GM12878 (cell line): ENCODE measurements at regions of chr2 and their contacts with region 1.

Region 1: DNA sequence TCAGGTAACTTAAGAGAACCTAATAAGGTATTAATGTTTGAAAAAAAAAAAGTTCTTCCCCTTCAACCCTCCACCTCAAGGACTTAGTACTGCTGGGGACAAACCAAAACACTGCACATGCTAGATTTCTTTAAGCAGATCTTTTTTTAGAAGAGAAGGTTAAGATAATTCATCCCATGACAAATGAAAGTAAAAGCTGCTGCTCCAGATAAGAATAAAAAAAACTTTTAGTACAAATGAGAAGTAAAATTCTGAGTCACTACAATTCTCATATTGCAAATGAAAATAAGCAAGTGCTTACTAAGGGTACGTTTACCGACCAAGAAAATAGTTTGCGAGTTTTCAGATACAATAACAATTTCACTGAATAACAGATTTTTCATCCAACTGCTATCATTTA is 8.9 kb downstream of the STAM2 start:
- DNase-seq: no peak
- ATAC-seq: peak; percentile 79
- H3K4me3 ChIP-seq: peak overlapping the region; percentile 56
- H3K27ac ChIP-seq: peak overlapping the region; percentile 86
- H3K4me1 ChIP-seq: peaks cover 19% of the 10 kb centered on the region
- H3K27me3 ChIP-seq: no peaks in the 10 kb centered on the region
- CTCF ChIP-seq: no peak
- EP300 ChIP-seq: no peak
- POLR2A ChIP-seq: no peak
- RAD21 ChIP-seq: no peak

Region 2: GRCh38 chr2:151828143-151828889 is 338.3 kb before region 1 on chr2 and contains the start of gene ARL5A:
- CTCF ChIA-PET with region 1: no interaction called
- POLR2A ChIA-PET with region 1: no interaction called
- RAD21 ChIA-PET with region 1: no interaction called
- SMC1A ChIA-PET with region 1: no interaction called
- in situ Hi-C with region 1: no loop called
- intact Hi-C with region 1: loop called (anchors 10 kb)
- DNase-seq: peak; percentile 92
- ATAC-seq: peak; percentile 92
- H3K4me3 ChIP-seq: peak within 1 kb of the TSS; percentile 92
- H3K27ac ChIP-seq: peak within 1 kb of the TSS; percentile 88
- H3K4me1 ChIP-seq: peaks cover 13% of the 10 kb centered on the region
- H3K27me3 ChIP-seq: no peaks in the 10 kb centered on the region
- CTCF ChIP-seq: no peak
- EP300 ChIP-seq: 0 out of 4 replicates have a peak, but pooled peaks of 1 of the 2 experiments have one; percentile 57
- POLR2A ChIP-seq: peak; percentile 94
- RAD21 ChIP-seq: no peak
- polyA plus RNA-seq, gene ARL5A: 9.4 to 10.9 TPM

Region 3: DNA sequence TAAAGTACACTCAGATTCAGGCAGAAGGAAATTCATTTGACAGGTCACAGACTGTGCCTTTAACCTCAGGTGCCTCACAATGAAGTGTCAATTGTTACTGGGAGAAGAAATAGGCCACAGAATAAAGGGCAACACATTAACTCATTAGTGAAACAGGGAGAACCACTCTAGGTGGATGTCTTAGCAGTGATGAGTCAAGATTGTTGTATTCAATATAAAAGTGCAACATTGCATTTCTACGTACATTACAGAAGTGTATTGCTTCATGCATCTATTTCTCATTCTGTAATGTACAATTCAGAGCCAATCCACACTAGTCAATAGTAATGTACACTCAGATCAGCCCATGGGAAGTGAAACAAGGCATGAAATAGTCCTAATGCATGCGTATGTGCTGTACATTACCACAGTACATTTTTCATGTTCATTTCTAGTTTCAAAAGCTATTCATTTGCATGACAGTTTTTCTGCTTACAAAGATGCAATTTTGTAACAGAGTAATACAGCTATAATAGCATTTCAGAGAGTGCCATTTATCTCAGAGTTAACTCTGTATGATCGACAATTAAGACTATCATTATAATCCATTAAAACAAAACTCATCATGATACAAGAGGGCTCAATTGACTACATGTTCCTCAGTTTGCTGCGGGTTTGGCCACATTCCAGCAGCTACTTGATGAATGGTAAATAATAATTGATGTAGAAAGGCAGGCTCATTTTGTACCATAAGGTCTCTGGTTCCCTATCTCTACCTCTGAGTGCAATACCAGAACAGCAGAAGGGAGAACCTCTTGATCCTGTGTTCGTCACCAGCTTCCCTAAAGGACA is 326.2 kb before region 1 on chr2:
- CTCF ChIA-PET with region 1: no interaction called
- POLR2A ChIA-PET with region 1: no interaction called
- RAD21 ChIA-PET with region 1: no interaction called
- SMC1A ChIA-PET with region 1: no interaction called
- in situ Hi-C with region 1: loop called (anchors 10 kb)
- intact Hi-C with region 1: no loop called
- DNase-seq: peak; percentile 82
- ATAC-seq: peak; percentile 99
- H3K4me3 ChIP-seq: no peak overlapping the region
- H3K27ac ChIP-seq: peak overlapping the region; percentile 72
- H3K4me1 ChIP-seq: peaks cover 40% of the 10 kb centered on the region
- H3K27me3 ChIP-seq: no peaks in the 10 kb centered on the region
- CTCF ChIP-seq: no peak
- EP300 ChIP-seq: peak in 1 of 2 experiments; percentile 91; a peak in 3 of 4 replicates
- POLR2A ChIP-seq: no peak
- RAD21 ChIP-seq: no peak

Region 4: DNA sequence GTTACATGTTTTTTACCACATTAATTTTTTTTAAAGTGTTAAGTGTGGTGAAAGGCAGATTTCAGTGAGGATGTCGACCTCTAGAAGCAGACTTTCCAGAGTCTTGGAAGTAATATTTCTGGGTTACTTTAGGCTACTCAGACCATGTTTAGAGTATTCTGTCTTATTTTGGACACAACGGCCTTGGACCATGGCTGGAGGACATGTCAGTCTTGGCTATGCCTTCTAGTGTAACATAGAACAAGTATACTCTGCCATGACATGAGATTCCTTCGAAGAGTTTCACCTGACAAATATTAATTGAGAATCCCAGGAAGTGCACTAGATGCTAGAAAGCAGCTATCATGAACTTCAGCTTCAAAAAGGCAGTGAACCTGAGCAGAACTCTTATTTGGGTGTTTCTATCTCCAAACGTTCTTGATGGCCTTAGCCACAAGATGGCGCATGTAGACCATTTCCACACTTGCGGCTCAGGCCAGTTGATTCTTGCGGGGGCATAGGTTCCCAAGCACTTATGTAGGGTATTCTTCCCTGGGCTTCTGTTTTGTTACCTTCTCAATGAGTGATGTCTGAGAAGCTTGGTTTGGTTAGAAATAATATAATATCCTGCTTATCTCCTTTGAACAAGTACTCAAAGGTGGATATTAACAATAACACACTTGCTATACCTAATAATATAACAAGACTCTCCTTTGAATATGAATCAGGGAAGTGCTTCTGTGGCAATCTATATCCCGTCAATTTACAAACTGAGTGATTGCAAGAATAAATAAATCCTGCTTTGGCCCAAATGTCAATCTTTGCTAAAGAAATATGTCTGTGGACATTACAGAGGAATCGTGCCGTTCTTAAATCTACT is 129.8 kb before region 1 on chr2:
- CTCF ChIA-PET with region 1: interaction called, 13 read pairs
- POLR2A ChIA-PET with region 1: no interaction called
- RAD21 ChIA-PET with region 1: interaction called, 5 read pairs
- SMC1A ChIA-PET with region 1: interaction called, 20 read pairs
- in situ Hi-C with region 1: no loop called
- intact Hi-C with region 1: no loop called
- DNase-seq: no peak
- ATAC-seq: peak; percentile 97
- H3K4me3 ChIP-seq: no peak overlapping the region
- H3K27ac ChIP-seq: no peak overlapping the region
- H3K4me1 ChIP-seq: no peaks in the 10 kb centered on the region
- H3K27me3 ChIP-seq: no peaks in the 10 kb centered on the region
- CTCF ChIP-seq: peak; percentile 78 to 89 (median 80)
- EP300 ChIP-seq: no peak
- POLR2A ChIP-seq: no peak
- RAD21 ChIP-seq: peak; percentile 99

Region 5: GRCh38 chr2:152054593-152054992 is 112.0 kb before region 1 on chr2:
- CTCF ChIA-PET with region 1: no interaction called
- POLR2A ChIA-PET with region 1: no interaction called
- RAD21 ChIA-PET with region 1: no interaction called
- SMC1A ChIA-PET with region 1: interaction called, 3 read pairs
- in situ Hi-C with region 1: loop called (anchors 5 kb)
- intact Hi-C with region 1: no loop called
- DNase-seq: no peak
- ATAC-seq: no peak
- H3K4me3 ChIP-seq: no peak overlapping the region
- H3K27ac ChIP-seq: no peak overlapping the region
- H3K4me1 ChIP-seq: peaks cover 34% of the 10 kb centered on the region
- H3K27me3 ChIP-seq: no peaks in the 10 kb centered on the region
- CTCF ChIP-seq: no peak
- EP300 ChIP-seq: no peak
- POLR2A ChIP-seq: no peak
- RAD21 ChIP-seq: no peak

Region 6: GRCh38 chr2:152155209-152155608 is 11.4 kb before region 1 on chr2:
- CTCF ChIA-PET with region 1: interaction called, 5 read pairs
- POLR2A ChIA-PET with region 1: interaction called, 10 read pairs
- RAD21 ChIA-PET with region 1: interaction called, 4 read pairs
- SMC1A ChIA-PET with region 1: interaction called, 12 read pairs
- in situ Hi-C with region 1: no loop called
- intact Hi-C with region 1: no loop called
- DNase-seq: no peak
- ATAC-seq: peak; percentile 55
- H3K4me3 ChIP-seq: no peak overlapping the region
- H3K27ac ChIP-seq: no peak overlapping the region
- H3K4me1 ChIP-seq: no peaks in the 10 kb centered on the region
- H3K27me3 ChIP-seq: no peaks in the 10 kb centered on the region
- CTCF ChIP-seq: no peak; a peak in 1 of 6 replicates
- EP300 ChIP-seq: no peak
- POLR2A ChIP-seq: no peak
- RAD21 ChIP-seq: peak; percentile 37; the same call in 1 of the 2 replicates

Region 7: DNA sequence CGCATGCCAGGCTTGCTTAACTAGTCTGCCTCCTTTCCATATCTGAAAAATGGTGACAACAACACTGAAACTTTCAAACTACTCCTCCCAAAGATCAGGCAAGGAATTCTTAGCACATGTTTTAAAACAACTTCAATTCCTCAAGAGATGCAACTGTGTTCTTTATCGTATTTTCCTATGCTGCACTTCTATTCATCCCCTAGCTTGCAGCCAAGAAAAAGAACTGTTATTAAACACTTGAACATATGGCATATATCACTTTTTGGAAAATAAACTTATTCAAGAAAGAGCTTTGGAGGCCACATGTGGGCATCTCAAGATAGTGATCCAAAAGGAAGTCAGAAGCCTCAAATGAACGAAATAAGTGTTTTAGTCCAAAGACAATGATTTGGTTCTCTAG is 84.6 kb after region 1 on chr2:
- CTCF ChIA-PET with region 1: no interaction called
- POLR2A ChIA-PET with region 1: no interaction called
- RAD21 ChIA-PET with region 1: no interaction called
- SMC1A ChIA-PET with region 1: no interaction called
- in situ Hi-C with region 1: no loop called
- intact Hi-C with region 1: no loop called
- DNase-seq: no peak
- ATAC-seq: no peak
- H3K4me3 ChIP-seq: no peak overlapping the region
- H3K27ac ChIP-seq: no peak overlapping the region
- H3K4me1 ChIP-seq: no peaks in the 10 kb centered on the region
- H3K27me3 ChIP-seq: peaks cover 0 to 3% of the 10 kb centered on the region in 2 experiments; a peak in 2 of 4 replicates
- CTCF ChIP-seq: no peak
- EP300 ChIP-seq: no peak
- POLR2A ChIP-seq: no peak
- RAD21 ChIP-seq: no peak